ENCODE measurements at regions of chr9 and their contacts with region 1.

Region 1: GRCh38 chr9:37784616-37785483 is at the start of gene EXOSC3:
- DNase-seq: peak; percentile 84 to 85
- ATAC-seq: peak; percentile 99
- H3K4me3 ChIP-seq: peak within 1 kb of the TSS; percentile 87 to 95 (median 94)
- H3K27ac ChIP-seq: peak within 1 kb of the TSS; percentile 77 to 89 (median 81)
- H3K4me1 ChIP-seq: peaks cover 15% of the 10 kb centered on the region in 2 donors
- H3K27me3 ChIP-seq: peaks cover 0 to 11% (median 0%) of the 10 kb centered on the region in 3 donors
- CTCF ChIP-seq: peak in 1 of 5 experiments; percentile 15
- POLR2A ChIP-seq: peak; percentile 13 to 63
- total RNA-seq, gene EXOSC3: 15.6 to 46.7 (median 17.8) TPM

Region 2: GRCh38 chr9:37575921-37576721 is 208.7 kb before region 1 on chr9 and contains the start of gene FBXO10:
- in situ Hi-C with region 1: loop called (anchors 10 to 25 kb)
- intact Hi-C with region 1: loop called (anchors 10 kb)
- DNase-seq: peak; percentile 53 to 72
- ATAC-seq: peak; percentile 62 to 71
- H3K4me3 ChIP-seq: peak within 1 kb of the TSS; percentile 84 to 96 (median 93)
- H3K27ac ChIP-seq: peak within 1 kb of the TSS; percentile 94 to 99 (median 98)
- H3K4me1 ChIP-seq: peaks cover 35 to 42% of the 10 kb centered on the region in 2 donors
- H3K27me3 ChIP-seq: no peaks in the 10 kb centered on the region
- CTCF ChIP-seq: peak in 1 of 5 experiments; percentile 24
- POLR2A ChIP-seq: peak; percentile 95 to 96
- total RNA-seq, gene FBXO10: 49.8 to 62.2 (median 53.5) TPM

Region 3: DNA sequence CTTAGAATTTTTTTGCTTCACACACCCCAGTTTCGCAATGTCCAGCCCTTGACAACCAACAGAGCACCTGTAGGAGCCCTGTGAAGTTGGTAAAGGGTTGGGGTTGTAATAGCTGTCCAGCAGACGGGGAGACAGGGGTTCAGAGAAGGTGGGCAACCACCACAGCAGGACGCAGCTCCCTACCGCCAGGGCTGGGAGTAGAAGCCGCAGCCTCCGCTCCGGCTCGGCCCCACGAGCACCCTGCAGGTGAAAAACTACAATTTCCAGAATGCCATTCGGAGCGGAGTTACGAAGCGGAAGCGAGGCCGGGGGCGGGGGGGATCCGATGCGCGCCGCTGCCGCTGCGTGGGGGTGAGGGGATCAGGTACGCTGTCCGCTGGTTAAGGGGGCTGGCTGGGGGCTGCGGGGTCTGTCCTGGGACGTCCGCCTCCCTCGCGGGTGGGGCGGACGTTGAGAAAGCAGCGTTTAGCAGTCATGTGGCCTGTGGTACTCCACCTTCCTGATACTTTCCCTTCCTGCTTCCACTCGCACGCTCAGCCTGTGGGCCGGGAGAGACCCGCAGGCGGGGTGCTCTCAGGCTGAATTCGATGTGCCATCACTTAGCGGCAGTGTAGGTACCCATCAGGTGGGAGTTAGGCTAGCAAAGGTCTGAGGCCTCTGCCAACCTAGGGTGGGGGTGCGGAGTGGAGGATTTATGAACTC is 31.2 kb before region 1 on chr9 and contains the start of gene TRMT10B:
- in situ Hi-C with region 1: no loop called
- intact Hi-C with region 1: loop called (anchors 2 kb)
- DNase-seq: peak; percentile 42 to 61
- ATAC-seq: peak; percentile 92 to 93
- H3K4me3 ChIP-seq: peak within 1 kb of the TSS; percentile 75 to 98 (median 88)
- H3K27ac ChIP-seq: peak within 1 kb of the TSS; percentile 79 to 88 (median 84)
- H3K4me1 ChIP-seq: peaks cover 3 to 14% of the 10 kb centered on the region in 2 donors
- H3K27me3 ChIP-seq: no peaks in the 10 kb centered on the region
- CTCF ChIP-seq: peak in 1 of 5 experiments; percentile 25
- POLR2A ChIP-seq: peak in 1 of 2 donors; percentile 32
- total RNA-seq, gene TRMT10B: 1.5 to 10.2 (median 3.0) TPM

Region 4: GRCh38 chr9:37800631-37801286 is 15.9 kb after region 1 on chr9 and contains the start of gene DCAF10:
- in situ Hi-C with region 1: no loop called
- intact Hi-C with region 1: loop called (anchors 1 kb)
- DNase-seq: peak; percentile 73 to 80
- ATAC-seq: peak; percentile 92 to 93
- H3K4me3 ChIP-seq: peak within 1 kb of the TSS; percentile 55 to 98 (median 80)
- H3K27ac ChIP-seq: peak within 1 kb of the TSS; percentile 74 to 91 (median 86)
- H3K4me1 ChIP-seq: peaks cover 28 to 33% of the 10 kb centered on the region in 2 donors
- H3K27me3 ChIP-seq: no peaks in the 10 kb centered on the region
- CTCF ChIP-seq: peak in 1 of 5 experiments; percentile 38
- POLR2A ChIP-seq: peak; percentile 59 to 77
- total RNA-seq, gene DCAF10: 11.0 to 24.5 (median 17.0) TPM

Measured in gastrocnemius medialis (tissue), 4 donors.